HAP-1 (cell line): ENCODE measurements at regions of chr19 and their contacts with region 1.

Region 1: GRCh38 chr19:12974301-12975220 is 5.2 kb downstream of the DAND5 start:
- DNase-seq: no peak
- H3K4me3 ChIP-seq: no peak overlapping the region
- H3K4me1 ChIP-seq: no peaks in the 10 kb centered on the region
- H3K27me3 ChIP-seq: no peaks in the 10 kb centered on the region

Region 2: GRCh38 chr19:13093407-13094105 is 119.0 kb after region 1 on chr19:
- in situ Hi-C with region 1: loop called (anchors 5 kb)
- DNase-seq: peak; percentile 70 to 88
- H3K4me3 ChIP-seq: no peak overlapping the region
- H3K4me1 ChIP-seq: 0 out of 2 replicates have a peak, but pooled peaks cover 3% of the 10 kb centered on the region
- H3K27me3 ChIP-seq: no peaks in the 10 kb centered on the region

Region 3: DNA sequence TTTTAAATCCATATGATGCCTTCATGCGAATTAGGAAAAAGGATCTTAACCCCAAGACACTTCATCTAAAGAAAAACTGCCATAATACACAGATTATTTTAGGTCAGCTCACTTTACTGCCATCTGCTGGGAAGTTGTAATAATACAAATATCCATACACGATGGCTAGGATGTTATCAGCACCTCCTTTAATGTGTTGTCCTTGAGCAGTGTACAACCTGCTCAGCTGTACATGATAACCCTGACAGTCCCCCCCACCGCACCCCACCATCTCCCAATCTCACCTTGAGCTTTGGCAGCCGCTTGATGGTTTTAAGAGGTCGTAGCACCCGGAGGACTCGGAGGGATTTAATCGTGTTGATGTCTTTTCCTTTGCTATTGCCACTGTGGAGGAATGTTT is 287.9 kb after region 1 on chr19:
- in situ Hi-C with region 1: loop called (anchors 10 kb)
- DNase-seq: peak in 1 of 2 experiments; percentile 50
- H3K4me3 ChIP-seq: no peak overlapping the region
- H3K4me1 ChIP-seq: no peaks in the 10 kb centered on the region
- H3K27me3 ChIP-seq: peaks cover 10% of the 10 kb centered on the region

Region 4: GRCh38 chr19:13281567-13282291 is 307.2 kb after region 1 on chr19:
- in situ Hi-C with region 1: no loop called
- DNase-seq: no peak
- H3K4me3 ChIP-seq: no peak overlapping the region
- H3K4me1 ChIP-seq: no peaks in the 10 kb centered on the region
- H3K27me3 ChIP-seq: no peaks in the 10 kb centered on the region

Region 5: GRCh38 chr19:13347367-13347766 is 372.8 kb after region 1 on chr19:
- in situ Hi-C with region 1: no loop called
- DNase-seq: no peak
- H3K4me3 ChIP-seq: no peak overlapping the region
- H3K4me1 ChIP-seq: no peaks in the 10 kb centered on the region
- H3K27me3 ChIP-seq: no peaks in the 10 kb centered on the region